Endothelial cell of umbilical vein (primary cell): ENCODE measurements at regions of chr11 and their contacts with region 1.

Region 1: GRCh38 chr11:123103326-123103980 is 41.5 kb upstream of the HSPA8 start:
- DNase-seq: peak; percentile 75
- H3K4me3 ChIP-seq: no peak overlapping the region
- H3K27ac ChIP-seq: no peak overlapping the region
- H3K4me1 ChIP-seq: peaks cover 2% of the 10 kb centered on the region
- H3K27me3 ChIP-seq: no peaks in the 10 kb centered on the region
- CTCF ChIP-seq: peak; percentile 58 to 62
- POLR2A ChIP-seq: no peak

Region 2: DNA sequence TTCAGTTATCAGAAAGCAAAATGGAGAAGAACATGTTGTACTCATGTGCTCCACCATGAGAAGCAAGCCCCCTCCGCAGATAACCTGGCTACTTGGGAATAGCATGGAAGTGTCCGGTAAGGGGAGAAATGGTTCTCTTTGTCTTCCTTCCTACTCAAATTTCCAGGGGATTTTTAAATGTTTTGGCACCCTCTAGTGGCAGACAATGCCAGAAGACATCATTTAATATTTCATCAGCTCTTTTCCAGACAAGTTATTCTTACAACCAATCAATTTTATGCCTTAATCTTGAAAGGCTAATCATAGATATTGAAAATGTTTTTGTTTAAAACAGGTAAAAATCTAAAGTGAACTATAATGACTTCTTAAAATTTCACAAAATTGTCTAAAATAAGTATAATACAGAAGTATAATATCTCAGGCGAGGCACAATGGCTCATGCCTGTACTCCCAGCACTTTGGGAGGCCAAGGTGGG is 249.4 kb before region 1 on chr11:
- CTCF ChIA-PET with region 1: no interaction called
- POLR2A ChIA-PET with region 1: no interaction called
- dilution Hi-C with region 1: no loop called
- intact Hi-C with region 1: no loop called
- DNase-seq: peak; percentile 78
- H3K4me3 ChIP-seq: no peak overlapping the region
- H3K27ac ChIP-seq: no peak overlapping the region
- H3K4me1 ChIP-seq: no peaks in the 10 kb centered on the region
- H3K27me3 ChIP-seq: peaks cover 0 to 3% of the 10 kb centered on the region in 2 experiments
- CTCF ChIP-seq: peak; percentile 47 to 63
- POLR2A ChIP-seq: no peak

Region 3: DNA sequence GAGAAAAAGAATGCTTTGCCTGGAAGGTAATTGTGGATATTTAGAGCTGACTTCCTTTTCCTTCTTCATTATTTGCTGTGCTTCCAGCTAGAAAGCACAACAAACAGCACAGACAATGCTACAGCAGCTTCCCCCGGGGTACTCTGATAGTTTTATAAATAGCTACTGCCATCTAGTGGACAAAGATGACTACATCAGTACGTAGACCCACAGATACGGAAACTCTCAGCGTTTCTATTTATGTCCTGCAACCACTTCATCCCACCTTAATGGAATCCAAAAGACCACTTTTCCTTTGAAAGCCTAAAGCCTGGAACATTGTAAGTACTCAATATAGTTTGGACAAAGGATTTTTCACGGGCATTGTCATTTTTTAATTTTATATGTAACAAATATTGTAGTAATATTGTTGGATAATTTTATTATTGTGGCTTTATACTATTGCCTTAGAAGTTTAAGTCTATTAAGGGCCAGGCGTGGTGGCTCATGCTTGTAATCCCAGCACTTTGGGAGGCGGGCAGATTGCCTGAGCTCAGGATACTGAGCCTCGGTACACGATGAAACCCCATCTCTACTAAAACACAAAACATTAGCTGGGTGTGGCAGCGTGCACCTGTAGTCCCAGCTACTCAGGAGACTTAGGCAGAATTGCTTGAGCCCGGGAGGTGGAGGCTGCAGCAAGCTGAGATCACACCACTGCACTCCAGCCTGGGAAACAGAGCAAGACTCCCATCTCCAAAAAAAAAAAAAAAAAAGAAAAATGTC is 49.0 kb before region 1 on chr11:
- CTCF ChIA-PET with region 1: interaction called, 12 read pairs
- POLR2A ChIA-PET with region 1: no interaction called
- dilution Hi-C with region 1: no loop called
- intact Hi-C with region 1: no loop called
- DNase-seq: peak; percentile 68
- H3K4me3 ChIP-seq: no peak overlapping the region
- H3K27ac ChIP-seq: no peak overlapping the region
- H3K4me1 ChIP-seq: peaks cover 13% of the 10 kb centered on the region
- H3K27me3 ChIP-seq: no peaks in the 10 kb centered on the region
- CTCF ChIP-seq: peak; percentile 62 to 65
- POLR2A ChIP-seq: peak; percentile 50

Region 4: DNA sequence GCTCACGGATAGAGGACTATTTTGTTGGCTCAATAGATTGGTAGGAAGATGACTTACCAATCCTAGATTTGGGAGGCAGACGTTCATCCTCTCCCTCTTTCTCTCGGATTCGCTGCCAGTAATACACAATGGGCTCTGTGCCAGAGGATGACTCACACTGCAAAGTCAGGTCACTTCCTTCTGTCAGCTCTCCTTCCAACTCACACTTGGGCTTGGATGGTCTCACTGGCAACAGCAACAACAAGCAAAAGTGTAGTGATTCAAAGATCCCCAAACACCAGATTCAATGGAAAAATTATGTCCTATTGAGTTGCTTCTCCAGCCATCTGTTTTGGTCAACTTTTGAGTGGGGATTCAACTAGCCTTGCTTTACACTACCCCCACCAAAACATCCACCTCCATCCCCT is 19.8 kb before region 1 on chr11:
- CTCF ChIA-PET with region 1: interaction called, 32 read pairs
- POLR2A ChIA-PET with region 1: no interaction called
- dilution Hi-C with region 1: no loop called
- intact Hi-C with region 1: no loop called
- DNase-seq: peak; percentile 96
- H3K4me3 ChIP-seq: no peak overlapping the region
- H3K27ac ChIP-seq: peak overlapping the region; percentile 74
- H3K4me1 ChIP-seq: peaks cover 15% of the 10 kb centered on the region
- H3K27me3 ChIP-seq: no peaks in the 10 kb centered on the region
- CTCF ChIP-seq: no peak
- POLR2A ChIP-seq: no peak

Region 5: DNA sequence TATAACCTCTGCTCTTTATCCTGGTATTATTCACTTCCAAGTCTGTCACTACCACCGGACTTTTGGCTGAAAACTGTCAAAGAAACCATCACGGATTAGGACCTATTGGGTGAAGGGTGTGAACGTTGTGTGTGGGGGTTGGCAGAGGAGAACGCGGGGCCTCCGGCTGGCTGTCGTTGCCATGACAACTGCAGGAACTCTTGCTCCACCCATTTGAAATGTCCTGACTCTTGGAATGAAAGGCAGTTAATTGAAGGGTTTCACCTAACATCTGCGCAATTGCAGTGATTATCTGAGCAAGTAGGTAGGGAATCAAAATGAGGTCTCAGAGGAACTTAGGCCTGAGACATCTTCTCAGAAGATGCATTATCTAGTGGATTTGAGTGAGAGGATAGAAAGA is 152.5 kb after region 1 on chr11:
- CTCF ChIA-PET with region 1: interaction called, 260 read pairs
- POLR2A ChIA-PET with region 1: no interaction called
- dilution Hi-C with region 1: loop called (anchors 25 kb)
- intact Hi-C with region 1: loop called (anchors 1 kb)
- DNase-seq: no peak
- H3K4me3 ChIP-seq: no peak overlapping the region
- H3K27ac ChIP-seq: no peak overlapping the region
- H3K4me1 ChIP-seq: no peaks in the 10 kb centered on the region
- H3K27me3 ChIP-seq: peaks cover 2 to 3% of the 10 kb centered on the region in 2 experiments
- CTCF ChIP-seq: no peak
- POLR2A ChIP-seq: no peak

Region 6: GRCh38 chr11:123301696-123302400 is 198.4 kb after region 1 on chr11:
- CTCF ChIA-PET with region 1: interaction called, 6 read pairs
- POLR2A ChIA-PET with region 1: no interaction called
- dilution Hi-C with region 1: no loop called
- intact Hi-C with region 1: loop called (anchors 1 kb)
- DNase-seq: peak; percentile 43
- H3K4me3 ChIP-seq: peak overlapping the region in 2 of 3 experiments; percentile 15 to 29
- H3K27ac ChIP-seq: no peak overlapping the region
- H3K4me1 ChIP-seq: peaks cover 17% of the 10 kb centered on the region
- H3K27me3 ChIP-seq: peaks cover 4 to 6% of the 10 kb centered on the region in 2 experiments
- CTCF ChIP-seq: peak; percentile 81 to 84
- POLR2A ChIP-seq: no peak

Region 7: DNA sequence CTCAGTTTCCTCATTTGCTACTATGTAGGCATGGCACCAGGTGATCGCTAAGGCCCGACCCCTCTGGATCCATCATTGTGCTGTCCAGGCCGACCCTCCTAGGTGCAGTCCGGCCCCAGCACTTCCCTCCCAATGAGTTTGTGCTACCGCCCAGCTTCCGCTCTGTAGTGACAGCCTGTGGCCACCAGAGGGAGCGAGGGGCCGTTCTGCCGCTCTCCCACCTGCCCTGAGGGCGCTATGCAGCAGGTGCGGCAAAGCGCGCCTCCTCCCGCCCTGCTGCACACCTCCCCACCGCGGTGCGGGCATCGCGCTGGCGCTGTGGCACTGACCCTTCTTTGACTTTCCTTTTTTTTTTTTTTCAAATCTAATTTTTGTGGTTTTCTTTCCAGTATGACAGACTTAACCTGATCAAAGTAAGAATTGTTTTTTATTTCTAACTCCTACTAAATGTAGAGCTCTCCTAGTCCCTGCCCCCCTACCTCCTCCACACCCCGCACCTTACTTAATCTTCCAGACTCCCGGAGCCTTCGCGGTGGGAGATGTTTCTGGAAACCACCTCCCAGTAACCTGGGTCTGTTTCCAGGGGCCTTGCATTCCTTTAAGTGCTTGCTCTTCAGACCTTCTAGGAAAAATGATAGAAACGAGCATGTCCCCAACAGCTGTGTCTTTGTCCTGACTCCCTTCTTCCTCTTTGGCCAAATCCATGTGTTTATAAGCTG is 477.3 kb after region 1 on chr11:
- CTCF ChIA-PET with region 1: interaction called, 3 read pairs
- POLR2A ChIA-PET with region 1: no interaction called
- dilution Hi-C with region 1: no loop called
- intact Hi-C with region 1: loop called (anchors 1 kb)
- DNase-seq: peak; percentile 49
- H3K4me3 ChIP-seq: no peak overlapping the region
- H3K27ac ChIP-seq: no peak overlapping the region
- H3K4me1 ChIP-seq: peaks cover 5% of the 10 kb centered on the region
- H3K27me3 ChIP-seq: peaks cover 2 to 4% of the 10 kb centered on the region in 2 experiments
- CTCF ChIP-seq: peak; percentile 91 to 98
- POLR2A ChIP-seq: no peak